Prostate gland (tissue), 2 donors: ENCODE measurements at regions of chr1 and their contacts with region 1.

Region 1: GRCh38 chr1:112955781-112956543 is at the start of gene SLC16A1:
- DNase-seq: peak; percentile 91
- H3K4me3 ChIP-seq: peak within 1 kb of the TSS; percentile 56 to 80
- H3K27ac ChIP-seq: peak within 1 kb of the TSS; percentile 80 to 85
- H3K4me1 ChIP-seq: peaks cover 3% of the 10 kb centered on the region
- H3K27me3 ChIP-seq: no peaks in the 10 kb centered on the region
- CTCF ChIP-seq: peak; percentile 10 to 34 (median 23)
- POLR2A ChIP-seq: peak; percentile 82
- total RNA-seq, gene SLC16A1: 14.6 to 110 TPM

Region 2: DNA sequence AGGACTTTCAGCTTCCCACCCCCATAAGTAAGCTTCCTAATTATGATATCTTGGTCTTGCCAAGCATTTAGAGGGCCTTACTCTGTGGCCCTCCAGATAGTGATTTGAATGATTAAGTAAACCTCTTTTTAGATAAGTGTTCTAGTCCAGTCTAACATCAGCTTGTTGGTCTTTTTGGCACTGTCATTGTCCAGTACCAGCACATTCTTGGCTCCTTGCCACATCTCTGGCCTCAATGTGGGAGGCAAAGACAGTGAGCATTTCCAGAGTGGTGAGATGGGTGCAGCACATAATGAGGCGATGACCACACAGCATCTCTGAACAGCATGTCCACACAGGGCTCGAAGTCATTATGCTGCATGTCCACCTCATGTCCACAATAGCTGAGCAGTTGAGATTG is 330.3 kb before region 1 on chr1:
- intact Hi-C with region 1: no loop called
- DNase-seq: no peak
- H3K4me3 ChIP-seq: no peak overlapping the region
- H3K27ac ChIP-seq: no peak overlapping the region
- H3K4me1 ChIP-seq: peaks cover 5% of the 10 kb centered on the region
- H3K27me3 ChIP-seq: no peaks in the 10 kb centered on the region
- CTCF ChIP-seq: no peak
- POLR2A ChIP-seq: no peak

Region 3: DNA sequence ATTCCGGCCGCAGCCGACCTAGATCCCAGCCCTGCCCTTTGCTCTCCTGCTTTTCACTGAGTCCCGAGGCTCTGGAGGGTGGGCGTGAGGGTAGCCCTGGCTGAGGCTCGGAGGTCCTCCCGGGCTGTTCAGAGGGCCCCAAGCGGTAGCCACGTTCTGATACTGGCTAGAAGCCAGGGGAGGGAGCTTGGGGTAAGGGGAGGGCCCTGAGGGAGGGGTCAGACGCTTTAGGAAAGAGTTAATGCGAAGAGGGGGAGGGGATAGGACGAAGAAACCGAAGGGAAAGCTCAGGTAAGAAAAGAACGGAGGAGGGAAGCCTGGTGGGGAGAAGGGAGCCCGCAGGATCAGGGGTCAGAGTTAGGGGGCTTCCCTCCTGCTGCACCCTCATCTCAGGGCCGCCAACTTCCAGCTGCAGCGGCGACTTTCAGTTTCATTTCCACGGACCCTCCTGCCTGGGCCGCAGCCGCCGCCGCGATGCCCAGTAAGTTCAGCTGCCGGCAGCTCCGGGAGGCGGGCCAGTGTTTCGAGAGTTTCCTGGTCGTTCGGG is 281.4 kb before region 1 on chr1 and contains the start of gene MOV10:
- intact Hi-C with region 1: no loop called
- DNase-seq: peak; percentile 58
- H3K4me3 ChIP-seq: peak within 1 kb of the TSS; percentile 66 to 75
- H3K27ac ChIP-seq: peak within 1 kb of the TSS; percentile 94
- H3K4me1 ChIP-seq: no peaks in the 10 kb centered on the region
- H3K27me3 ChIP-seq: no peaks in the 10 kb centered on the region
- CTCF ChIP-seq: no peak
- POLR2A ChIP-seq: no peak
- total RNA-seq, gene MOV10: 47.0 to 169 TPM

Region 4: DNA sequence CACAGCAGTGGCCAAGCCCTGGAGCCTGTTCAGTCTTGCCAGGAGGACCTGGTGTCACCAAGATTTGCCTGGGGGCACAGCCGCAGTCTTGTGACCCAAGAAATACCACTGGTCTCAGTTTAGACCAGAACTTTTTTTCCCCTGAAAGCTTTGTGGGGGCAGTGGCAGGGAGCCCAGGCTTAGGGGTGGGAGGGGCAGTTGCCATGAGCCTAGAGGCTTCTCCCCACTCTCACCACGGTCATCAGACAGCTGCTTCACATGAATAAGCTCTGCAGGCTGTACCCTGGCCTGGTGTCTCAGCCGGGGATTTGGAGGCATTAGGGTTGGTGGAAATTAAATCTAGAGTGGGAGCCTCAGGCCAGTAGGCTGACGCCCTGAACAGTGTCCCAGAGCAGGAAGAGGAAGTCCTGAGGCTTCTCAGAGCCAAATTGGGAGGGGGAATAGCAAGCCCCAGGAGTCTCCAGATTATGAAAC is 73.7 kb before region 1 on chr1:
- intact Hi-C with region 1: loop called (anchors 10 kb)
- DNase-seq: no peak
- H3K4me3 ChIP-seq: no peak overlapping the region
- H3K27ac ChIP-seq: peak overlapping the region in 1 of 2 donors; percentile 41
- H3K4me1 ChIP-seq: no peaks in the 10 kb centered on the region
- H3K27me3 ChIP-seq: no peaks in the 10 kb centered on the region
- CTCF ChIP-seq: no peak
- POLR2A ChIP-seq: no peak

Region 5: GRCh38 chr1:112998592-112999235 is 42.8 kb after region 1 on chr1:
- intact Hi-C with region 1: loop called (anchors 5 kb)
- DNase-seq: no peak
- H3K4me3 ChIP-seq: no peak overlapping the region
- H3K27ac ChIP-seq: no peak overlapping the region
- H3K4me1 ChIP-seq: no peaks in the 10 kb centered on the region
- H3K27me3 ChIP-seq: no peaks in the 10 kb centered on the region
- CTCF ChIP-seq: no peak
- POLR2A ChIP-seq: no peak

Region 6: GRCh38 chr1:113042285-113043143 is 86.6 kb after region 1 on chr1:
- intact Hi-C with region 1: loop called (anchors 10 kb)
- DNase-seq: peak; percentile 69
- H3K4me3 ChIP-seq: no peak overlapping the region
- H3K27ac ChIP-seq: no peak overlapping the region
- H3K4me1 ChIP-seq: no peaks in the 10 kb centered on the region
- H3K27me3 ChIP-seq: no peaks in the 10 kb centered on the region
- CTCF ChIP-seq: peak in 3 of 4 experiments; percentile 55 to 65 (median 61)
- POLR2A ChIP-seq: no peak